PC-9 (cell line): ENCODE measurements at regions of chr17 and their contacts with region 1.

Region 1: GRCh38 chr17:35529866-35530265 is 7.6 kb downstream of the SLFN12L start:
- DNase-seq: no peak
- H3K4me3 ChIP-seq: no peak overlapping the region
- H3K27ac ChIP-seq: no peak overlapping the region
- H3K4me1 ChIP-seq: no peaks in the 10 kb centered on the region
- H3K27me3 ChIP-seq: peaks cover 17% of the 10 kb centered on the region
- CTCF ChIP-seq: no peak

Region 2: DNA sequence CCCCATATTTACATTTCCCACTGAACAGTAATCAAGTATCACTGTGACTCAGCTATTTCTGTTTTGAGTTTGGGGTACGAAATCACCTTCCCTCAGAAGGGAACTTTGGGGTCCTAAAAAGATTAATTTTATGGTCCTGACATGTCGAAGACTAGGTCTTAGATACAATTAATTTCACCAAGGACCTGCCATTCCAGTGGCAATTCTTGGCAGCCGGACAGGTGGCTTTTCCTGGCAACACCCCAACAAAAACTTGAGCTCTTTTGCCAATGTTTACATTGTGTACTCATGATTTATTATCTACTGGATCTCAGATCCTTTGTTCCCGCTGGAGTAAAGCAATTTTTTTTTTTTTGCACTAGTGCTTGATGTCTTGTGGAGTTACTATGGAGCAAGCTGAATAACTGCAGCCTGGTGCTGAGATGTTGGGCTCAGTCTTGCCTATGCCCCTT is 272.6 kb before region 1 on chr17:
- CTCF ChIA-PET with region 1: no interaction called
- POLR2A ChIA-PET with region 1: no interaction called
- intact Hi-C with region 1: loop called (anchors 5 kb)
- DNase-seq: peak; percentile 86 to 92
- H3K4me3 ChIP-seq: 0 out of 2 replicates have a peak overlapping the region, but pooled peaks have one; percentile 5
- H3K27ac ChIP-seq: peak overlapping the region; percentile 50
- H3K4me1 ChIP-seq: peaks cover 42% of the 10 kb centered on the region
- H3K27me3 ChIP-seq: no peaks in the 10 kb centered on the region
- CTCF ChIP-seq: no peak

Region 3: DNA sequence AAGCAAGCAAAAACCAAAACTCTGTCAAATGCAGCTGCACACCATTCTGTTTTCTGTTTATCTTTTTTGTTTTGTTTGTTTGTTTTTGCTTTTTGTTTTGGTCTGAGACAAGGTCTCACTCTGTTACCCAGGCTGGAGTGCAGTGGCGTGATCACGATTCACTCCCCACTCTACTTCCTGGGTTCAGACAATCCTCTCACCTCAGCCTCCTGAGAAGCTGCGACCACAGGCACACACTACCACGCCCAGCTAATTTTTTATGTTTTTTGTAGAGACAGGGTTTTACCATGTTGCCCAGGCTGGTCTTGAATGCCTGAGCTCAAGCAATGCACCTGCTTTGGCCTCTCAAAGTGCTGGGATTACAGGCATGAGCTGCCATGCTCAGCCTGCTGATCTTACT is 62.0 kb before region 1 on chr17:
- CTCF ChIA-PET with region 1: no interaction called
- POLR2A ChIA-PET with region 1: no interaction called
- intact Hi-C with region 1: no loop called
- DNase-seq: no peak
- H3K4me3 ChIP-seq: no peak overlapping the region
- H3K27ac ChIP-seq: no peak overlapping the region
- H3K4me1 ChIP-seq: no peaks in the 10 kb centered on the region
- H3K27me3 ChIP-seq: peaks cover 27% of the 10 kb centered on the region; the same call in 1 of the 2 replicates
- CTCF ChIP-seq: no peak